Activated CD4-positive, alpha-beta memory T cell treated with anti-CD3 and anti-CD28 coated beads for 36 hours (primary cell): ENCODE measurements at regions of chr2 and their contacts with region 1.

Region 1: DNA sequence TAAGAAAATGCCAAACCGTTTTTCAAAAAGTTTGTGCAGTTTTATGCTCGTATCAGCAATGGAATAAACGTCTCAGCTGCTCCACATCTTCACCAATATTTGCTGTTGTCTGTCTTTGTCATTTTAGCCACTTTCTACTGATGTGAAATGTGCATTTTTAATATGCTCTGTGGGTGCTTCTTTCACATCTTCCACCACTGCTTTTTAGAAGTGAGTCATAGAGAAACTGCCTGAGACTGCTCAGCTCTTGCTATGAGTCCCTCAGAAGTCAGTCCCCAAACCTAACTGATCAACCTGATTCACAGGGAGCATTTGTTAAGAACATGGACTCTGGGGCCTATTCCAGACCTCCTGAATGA is 41.0 kb upstream of the EPC2 start:
- DNase-seq: peak; percentile 45
- H3K4me3 Mint-ChIP-seq: no peak overlapping the region
- H3K27ac Mint-ChIP-seq: peak overlapping the region; percentile 87
- H3K4me1 Mint-ChIP-seq: peaks cover 14% of the 10 kb centered on the region
- H3K27me3 Mint-ChIP-seq: peaks cover 7% of the 10 kb centered on the region

Region 2: GRCh38 chr2:147297820-147298219 is 1305.7 kb before region 1 on chr2:
- CTCF ChIA-PET with region 1: no interaction called
- POLR2A ChIA-PET with region 1: no interaction called
- intact Hi-C with region 1: loop called (anchors 5 kb)
- DNase-seq: peak; percentile 58
- H3K4me3 Mint-ChIP-seq: peak overlapping the region; percentile 39
- H3K27ac Mint-ChIP-seq: peak overlapping the region; percentile 89
- H3K4me1 Mint-ChIP-seq: peaks cover 73% of the 10 kb centered on the region
- H3K27me3 Mint-ChIP-seq: no peaks in the 10 kb centered on the region

Region 3: GRCh38 chr2:148552675-148553331 is 50.7 kb before region 1 on chr2:
- CTCF ChIA-PET with region 1: no interaction called
- POLR2A ChIA-PET with region 1: interaction called, 5 read pairs
- intact Hi-C with region 1: loop called (anchors 1 kb)
- DNase-seq: peak; percentile 36
- H3K4me3 Mint-ChIP-seq: no peak overlapping the region
- H3K27ac Mint-ChIP-seq: no peak overlapping the region
- H3K4me1 Mint-ChIP-seq: peaks cover 4% of the 10 kb centered on the region
- H3K27me3 Mint-ChIP-seq: no peaks in the 10 kb centered on the region

Region 4: GRCh38 chr2:148590612-148591011 is 12.9 kb before region 1 on chr2:
- CTCF ChIA-PET with region 1: interaction called, 4 read pairs
- POLR2A ChIA-PET with region 1: no interaction called
- intact Hi-C with region 1: loop called (anchors 1 kb)
- DNase-seq: no peak
- H3K4me3 Mint-ChIP-seq: no peak overlapping the region
- H3K27ac Mint-ChIP-seq: no peak overlapping the region
- H3K4me1 Mint-ChIP-seq: no peaks in the 10 kb centered on the region
- H3K27me3 Mint-ChIP-seq: no peaks in the 10 kb centered on the region

Region 5: GRCh38 chr2:148726228-148726627 is 122.7 kb after region 1 on chr2:
- CTCF ChIA-PET with region 1: no interaction called
- POLR2A ChIA-PET with region 1: no interaction called
- intact Hi-C with region 1: loop called (anchors 1 kb)
- DNase-seq: no peak
- H3K4me3 Mint-ChIP-seq: no peak overlapping the region
- H3K27ac Mint-ChIP-seq: peak overlapping the region; percentile 33
- H3K4me1 Mint-ChIP-seq: peaks cover 50% of the 10 kb centered on the region
- H3K27me3 Mint-ChIP-seq: no peaks in the 10 kb centered on the region

Region 6: DNA sequence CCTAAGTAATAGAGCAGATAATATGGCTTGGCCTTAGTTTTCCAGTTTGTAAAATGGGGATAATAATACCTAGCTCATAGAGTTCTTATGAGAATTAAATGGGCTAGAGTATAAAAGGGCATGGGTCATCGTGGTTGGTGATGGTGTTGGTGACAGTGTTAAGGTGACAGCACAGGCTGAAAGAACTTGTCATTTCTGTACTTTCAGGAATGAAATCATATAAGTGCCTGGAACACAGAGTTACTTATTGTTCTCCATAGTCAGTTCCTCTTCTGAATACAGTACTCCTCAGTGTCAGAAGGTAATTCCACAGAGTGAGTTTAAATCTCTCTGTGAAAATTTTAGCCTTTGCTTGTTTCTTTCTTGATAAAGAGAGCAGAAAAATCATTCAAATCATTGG is 313.9 kb after region 1 on chr2:
- CTCF ChIA-PET with region 1: no interaction called
- POLR2A ChIA-PET with region 1: no interaction called
- intact Hi-C with region 1: loop called (anchors 1 kb)
- DNase-seq: peak; percentile 47
- H3K4me3 Mint-ChIP-seq: no peak overlapping the region
- H3K27ac Mint-ChIP-seq: no peak overlapping the region
- H3K4me1 Mint-ChIP-seq: peaks cover 14% of the 10 kb centered on the region
- H3K27me3 Mint-ChIP-seq: no peaks in the 10 kb centered on the region